Naive thymus-derived CD4-positive, alpha-beta T cell (primary cell): ENCODE measurements at regions of chr1 and their contacts with region 1.

Region 1: GRCh38 chr1:116570358-116571200 is at the start of gene CD58:
- DNase-seq: peak; percentile 35 to 86 (median 64)
- ATAC-seq: peak; percentile 87
- H3K4me3 ChIP-seq: peak within 1 kb of the TSS; percentile 83
- H3K4me3 Mint-ChIP-seq: peak within 1 kb of the TSS; percentile 86 to 97 (median 90)
- H3K27ac ChIP-seq: peak within 1 kb of the TSS; percentile 70
- H3K27ac Mint-ChIP-seq: peak within 1 kb of the TSS in 7 of 9 donors; percentile 68 to 95 (median 78)
- H3K4me1 ChIP-seq: peaks cover 10 to 30% of the 10 kb centered on the region in 2 donors
- H3K4me1 Mint-ChIP-seq: peaks cover 12 to 62% (median 31%) of the 10 kb centered on the region in 7 donors
- H3K27me3 ChIP-seq: no peaks in the 10 kb centered on the region
- H3K27me3 Mint-ChIP-seq: no peaks in the 10 kb centered on the region
- total RNA-seq, gene CD58: 3.3 to 35.0 (median 4.4) TPM

Region 2: GRCh38 chr1:116139592-116140134 is 430.9 kb before region 1 on chr1:
- CTCF ChIA-PET with region 1: interaction called, 3 read pairs
- POLR2A ChIA-PET with region 1: no interaction called
- intact Hi-C with region 1: loop called (anchors 1 to 2 kb)
- DNase-seq: no peak
- ATAC-seq: no peak
- H3K4me3 ChIP-seq: no peak overlapping the region
- H3K4me3 Mint-ChIP-seq: no peak overlapping the region
- H3K27ac ChIP-seq: no peak overlapping the region
- H3K27ac Mint-ChIP-seq: no peak overlapping the region
- H3K4me1 ChIP-seq: no peaks in the 10 kb centered on the region
- H3K4me1 Mint-ChIP-seq: peaks cover 0 to 10% (median 5%) of the 10 kb centered on the region in 7 donors
- H3K27me3 ChIP-seq: no peaks in the 10 kb centered on the region
- H3K27me3 Mint-ChIP-seq: peaks cover 0 to 26% (median 5%) of the 10 kb centered on the region in 5 donors

Region 3: DNA sequence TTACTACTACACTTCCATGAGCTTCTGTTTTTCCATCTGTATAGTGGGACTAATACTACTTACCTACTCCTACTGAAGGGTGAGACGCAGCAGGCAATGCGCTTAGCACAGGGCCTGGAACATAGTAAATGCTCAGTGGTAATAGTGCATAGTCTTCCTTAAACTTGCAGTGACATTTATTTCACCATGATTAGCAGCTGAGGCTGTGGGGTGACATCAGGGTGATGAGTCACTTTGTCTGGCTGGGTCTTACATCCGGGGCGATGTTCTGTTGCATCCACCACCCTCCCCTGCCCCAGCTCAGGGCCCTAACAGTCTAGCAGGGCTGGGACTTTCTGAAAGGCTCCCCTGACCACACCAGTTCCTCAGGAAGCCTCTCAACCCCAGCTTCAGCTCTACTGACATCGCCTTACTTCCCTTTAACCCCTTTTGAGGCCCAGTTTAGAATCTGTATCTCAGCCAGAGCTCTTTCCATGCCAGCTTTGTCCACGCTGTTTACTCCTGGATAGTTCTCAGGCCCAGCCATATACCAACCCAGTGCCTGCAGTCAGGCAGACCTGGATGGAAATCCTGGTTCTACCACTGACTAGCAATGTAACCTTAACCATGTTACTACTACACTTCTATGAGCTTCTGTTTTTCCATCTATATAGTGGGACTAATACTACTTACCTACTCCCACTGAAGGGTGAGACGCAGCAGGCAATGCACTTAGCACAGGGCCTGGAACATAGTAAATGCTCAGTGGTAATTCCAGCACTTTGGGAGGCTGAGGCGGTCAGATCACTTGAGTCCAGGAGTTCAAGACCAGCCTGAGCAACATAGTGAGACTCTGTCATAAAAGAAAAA is 66.0 kb before region 1 on chr1:
- CTCF ChIA-PET with region 1: interaction called, 4 read pairs
- POLR2A ChIA-PET with region 1: no interaction called
- intact Hi-C with region 1: loop called (anchors 1 kb)
- DNase-seq: peak; percentile 49 to 86 (median 73)
- ATAC-seq: peak; percentile 96
- H3K4me3 ChIP-seq: peak overlapping the region; percentile 1
- H3K4me3 Mint-ChIP-seq: peak overlapping the region in 8 of 10 donors; percentile 11 to 77 (median 48)
- H3K27ac ChIP-seq: peak overlapping the region; percentile 48
- H3K27ac Mint-ChIP-seq: peak overlapping the region; percentile 65 to 92 (median 77)
- H3K4me1 ChIP-seq: peaks cover 20 to 49% of the 10 kb centered on the region in 2 donors
- H3K4me1 Mint-ChIP-seq: peaks cover 21 to 89% (median 34%) of the 10 kb centered on the region in 7 donors
- H3K27me3 ChIP-seq: no peaks in the 10 kb centered on the region
- H3K27me3 Mint-ChIP-seq: no peaks in the 10 kb centered on the region

Region 4: DNA sequence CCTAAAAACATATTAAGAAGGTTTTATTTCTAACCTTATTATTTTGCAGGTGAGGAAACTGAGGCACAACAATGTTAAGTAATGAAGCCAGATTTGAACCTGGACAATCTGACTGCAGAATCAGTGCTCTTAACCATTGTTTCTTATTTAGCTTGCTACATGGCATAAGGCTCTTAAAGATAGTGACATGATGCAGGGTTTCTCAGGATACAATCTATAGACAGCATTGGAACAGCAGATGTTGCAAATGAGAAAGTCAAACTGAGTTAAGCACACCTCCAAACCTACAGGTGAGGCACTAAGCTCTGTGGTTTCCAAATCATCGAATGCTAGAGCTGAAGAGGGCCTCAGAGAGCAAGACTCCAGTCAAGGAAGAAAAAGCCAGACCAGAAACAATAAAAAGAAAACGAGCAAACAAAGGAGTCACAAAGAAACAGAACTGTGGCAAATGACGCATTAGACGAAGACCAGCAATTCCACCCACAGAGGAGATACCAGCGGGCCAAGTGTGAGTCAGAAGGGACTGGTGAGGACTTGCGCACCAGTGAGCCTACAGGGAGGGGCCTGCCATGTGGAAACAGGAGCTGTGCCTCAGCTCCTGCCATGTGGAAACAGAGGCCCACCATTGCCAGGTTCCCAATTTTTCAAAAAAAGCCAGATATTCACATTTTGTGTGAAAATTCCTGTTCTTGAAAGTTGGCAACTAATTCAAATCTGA is 14.1 kb before region 1 on chr1:
- CTCF ChIA-PET with region 1: interaction called, 4 read pairs
- POLR2A ChIA-PET with region 1: no interaction called
- intact Hi-C with region 1: loop called in 1 of 2 experiments (anchors 1 kb)
- DNase-seq: peak in 1 of 9 donors; percentile 72
- ATAC-seq: peak; percentile 91
- H3K4me3 ChIP-seq: no peak overlapping the region
- H3K4me3 Mint-ChIP-seq: peak overlapping the region in 1 of 10 donors; percentile 33
- H3K27ac ChIP-seq: no peak overlapping the region
- H3K27ac Mint-ChIP-seq: peak overlapping the region in 1 of 9 donors; percentile 70
- H3K4me1 ChIP-seq: peaks cover 0 to 27% of the 10 kb centered on the region in 2 donors
- H3K4me1 Mint-ChIP-seq: peaks cover 0 to 75% (median 18%) of the 10 kb centered on the region in 7 donors
- H3K27me3 ChIP-seq: no peaks in the 10 kb centered on the region
- H3K27me3 Mint-ChIP-seq: no peaks in the 10 kb centered on the region

Region 5: GRCh38 chr1:116624040-116624439 is 53.5 kb after region 1 on chr1:
- CTCF ChIA-PET with region 1: no interaction called
- POLR2A ChIA-PET with region 1: no interaction called
- intact Hi-C with region 1: no loop called
- DNase-seq: no peak
- ATAC-seq: no peak
- H3K4me3 ChIP-seq: no peak overlapping the region
- H3K4me3 Mint-ChIP-seq: no peak overlapping the region
- H3K27ac ChIP-seq: no peak overlapping the region
- H3K27ac Mint-ChIP-seq: no peak overlapping the region
- H3K4me1 ChIP-seq: no peaks in the 10 kb centered on the region
- H3K4me1 Mint-ChIP-seq: peaks cover 0 to 7% (median 0%) of the 10 kb centered on the region in 7 donors
- H3K27me3 ChIP-seq: no peaks in the 10 kb centered on the region
- H3K27me3 Mint-ChIP-seq: peaks cover 4 to 17% (median 10%) of the 10 kb centered on the region in 5 donors

Region 6: GRCh38 chr1:116654355-116654754 is 83.8 kb after region 1 on chr1:
- CTCF ChIA-PET with region 1: no interaction called
- POLR2A ChIA-PET with region 1: no interaction called
- intact Hi-C with region 1: no loop called
- DNase-seq: no peak
- ATAC-seq: no peak
- H3K4me3 ChIP-seq: no peak overlapping the region
- H3K4me3 Mint-ChIP-seq: no peak overlapping the region
- H3K27ac ChIP-seq: no peak overlapping the region
- H3K27ac Mint-ChIP-seq: no peak overlapping the region
- H3K4me1 ChIP-seq: no peaks in the 10 kb centered on the region
- H3K4me1 Mint-ChIP-seq: no peaks in the 10 kb centered on the region
- H3K27me3 ChIP-seq: no peaks in the 10 kb centered on the region
- H3K27me3 Mint-ChIP-seq: peaks cover 12 to 37% (median 21%) of the 10 kb centered on the region in 5 donors

Region 7: GRCh38 chr1:116711263-116711840 is 140.8 kb after region 1 on chr1:
- CTCF ChIA-PET with region 1: no interaction called
- POLR2A ChIA-PET with region 1: no interaction called
- intact Hi-C with region 1: no loop called
- DNase-seq: no peak
- ATAC-seq: no peak
- H3K4me3 ChIP-seq: no peak overlapping the region
- H3K4me3 Mint-ChIP-seq: no peak overlapping the region
- H3K27ac ChIP-seq: no peak overlapping the region
- H3K27ac Mint-ChIP-seq: no peak overlapping the region
- H3K4me1 ChIP-seq: no peaks in the 10 kb centered on the region
- H3K4me1 Mint-ChIP-seq: peaks cover 0 to 8% (median 0%) of the 10 kb centered on the region in 7 donors
- H3K27me3 ChIP-seq: no peaks in the 10 kb centered on the region
- H3K27me3 Mint-ChIP-seq: peaks cover 8 to 21% (median 12%) of the 10 kb centered on the region in 5 donors

Region 8: GRCh38 chr1:116737020-116737854 is 166.7 kb after region 1 on chr1:
- CTCF ChIA-PET with region 1: no interaction called
- POLR2A ChIA-PET with region 1: interaction called, 4 read pairs
- intact Hi-C with region 1: loop called (anchors 1 to 5 kb)
- DNase-seq: peak; percentile 57 to 85 (median 80)
- ATAC-seq: peak; percentile 69
- H3K4me3 ChIP-seq: peak overlapping the region; percentile 28
- H3K4me3 Mint-ChIP-seq: peak overlapping the region; percentile 74 to 87 (median 82)
- H3K27ac ChIP-seq: peak overlapping the region; percentile 96
- H3K27ac Mint-ChIP-seq: peak overlapping the region; percentile 95 to 100 (median 98)
- H3K4me1 ChIP-seq: peaks cover 26 to 44% of the 10 kb centered on the region in 2 donors
- H3K4me1 Mint-ChIP-seq: peaks cover 39 to 54% (median 46%) of the 10 kb centered on the region in 7 donors
- H3K27me3 ChIP-seq: no peaks in the 10 kb centered on the region
- H3K27me3 Mint-ChIP-seq: no peaks in the 10 kb centered on the region

Region 9: GRCh38 chr1:116934586-116935207 is 364.1 kb after region 1 on chr1:
- CTCF ChIA-PET with region 1: no interaction called
- POLR2A ChIA-PET with region 1: no interaction called
- intact Hi-C with region 1: loop called in 1 of 2 experiments (anchors 5 kb)
- DNase-seq: peak in 5 of 9 donors; percentile 34 to 46 (median 39)
- ATAC-seq: peak; percentile 58
- H3K4me3 ChIP-seq: no peak overlapping the region
- H3K4me3 Mint-ChIP-seq: peak overlapping the region in 4 of 10 donors; percentile 4 to 40 (median 19)
- H3K27ac ChIP-seq: no peak overlapping the region
- H3K27ac Mint-ChIP-seq: peak overlapping the region in 8 of 9 donors; percentile 21 to 82 (median 52)
- H3K4me1 ChIP-seq: peaks cover 20 to 22% of the 10 kb centered on the region in 2 donors
- H3K4me1 Mint-ChIP-seq: peaks cover 14 to 28% (median 24%) of the 10 kb centered on the region in 7 donors
- H3K27me3 ChIP-seq: no peaks in the 10 kb centered on the region
- H3K27me3 Mint-ChIP-seq: no peaks in the 10 kb centered on the region

Region 10: GRCh38 chr1:117605774-117606648 is 1035.4 kb after region 1 on chr1 and contains the start of gene TENT5C:
- CTCF ChIA-PET with region 1: no interaction called
- POLR2A ChIA-PET with region 1: no interaction called
- intact Hi-C with region 1: loop called in 1 of 2 experiments (anchors 2 kb)
- DNase-seq: peak; percentile 98 to 99 (median 99)
- ATAC-seq: peak; percentile 97
- H3K4me3 ChIP-seq: peak within 1 kb of the TSS; percentile 79
- H3K4me3 Mint-ChIP-seq: peak within 1 kb of the TSS; percentile 94 to 100 (median 98)
- H3K27ac ChIP-seq: peak within 1 kb of the TSS; percentile 86
- H3K27ac Mint-ChIP-seq: peak within 1 kb of the TSS; percentile 96 to 99 (median 97)
- H3K4me1 ChIP-seq: peaks cover 20 to 22% of the 10 kb centered on the region in 2 donors
- H3K4me1 Mint-ChIP-seq: peaks cover 25 to 44% (median 32%) of the 10 kb centered on the region in 7 donors
- H3K27me3 ChIP-seq: no peaks in the 10 kb centered on the region
- H3K27me3 Mint-ChIP-seq: peaks cover 0 to 42% (median 0%) of the 10 kb centered on the region in 5 donors
- total RNA-seq, gene TENT5C: 3.7 to 47.0 (median 12.9) TPM